ENCODE measurements at regions of chr13 and their contacts with region 1.

Region 1: DNA sequence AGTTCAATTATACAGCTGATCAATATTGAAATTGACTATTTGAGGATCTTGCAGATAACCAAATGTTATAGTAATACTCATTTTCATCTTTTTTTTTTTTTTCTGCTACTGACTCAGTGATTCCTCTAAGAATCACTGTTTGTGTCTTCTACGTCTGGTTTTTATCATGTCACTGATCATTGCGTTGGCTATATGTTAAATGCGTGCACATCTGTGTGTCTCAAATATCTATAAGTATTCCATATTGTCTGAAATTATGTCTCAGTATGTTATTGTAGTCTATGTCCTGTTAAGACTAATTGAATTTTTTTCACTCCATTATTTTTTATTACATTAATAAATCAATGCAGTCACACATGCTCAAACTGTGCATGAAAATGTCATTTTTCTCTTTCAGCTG is 200.5 kb downstream of the PCDH20 start:
- DNase-seq: no peak
- ATAC-seq: no peak
- H3K4me3 ChIP-seq: no peak overlapping the region
- H3K27ac ChIP-seq: no peak overlapping the region
- H3K4me1 ChIP-seq: no peaks in the 10 kb centered on the region
- H3K27me3 ChIP-seq: no peaks in the 10 kb centered on the region

Region 2: DNA sequence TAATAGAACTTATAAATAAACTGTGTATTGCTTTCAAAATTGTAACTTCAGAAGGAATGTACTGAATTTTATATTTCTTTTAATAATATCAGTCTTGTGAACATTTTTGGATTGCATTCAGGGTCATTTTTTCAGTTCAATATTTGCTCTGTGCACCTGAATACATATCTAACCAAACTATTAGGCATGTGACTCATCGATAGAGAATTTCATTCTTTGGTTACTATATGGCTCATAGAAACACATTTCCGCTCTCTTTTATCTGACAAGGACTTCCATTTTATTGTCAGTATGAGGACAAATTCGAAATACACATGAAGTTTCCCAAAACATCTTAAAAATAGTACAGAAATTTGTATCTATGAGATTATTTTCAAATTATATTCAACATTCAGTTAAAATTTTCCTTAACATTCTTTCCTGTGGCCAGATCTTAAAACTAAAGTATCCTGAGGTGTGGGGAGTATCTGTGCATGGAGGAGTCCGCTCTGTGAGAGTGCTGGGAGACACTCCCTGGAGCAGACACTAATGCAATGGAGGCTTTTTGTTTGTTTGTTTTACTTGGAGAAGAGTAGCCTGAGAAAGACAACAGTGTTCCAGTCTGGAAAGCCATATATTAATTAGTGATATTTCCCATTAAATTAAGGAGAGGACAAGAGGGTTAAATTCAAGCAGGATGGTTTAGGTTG is 283.1 kb before region 1 on chr13:
- intact Hi-C with region 1: no loop called
- DNase-seq: no peak
- ATAC-seq: no peak
- H3K4me3 ChIP-seq: no peak overlapping the region
- H3K27ac ChIP-seq: no peak overlapping the region
- H3K4me1 ChIP-seq: no peaks in the 10 kb centered on the region
- H3K27me3 ChIP-seq: no peaks in the 10 kb centered on the region

Region 3: DNA sequence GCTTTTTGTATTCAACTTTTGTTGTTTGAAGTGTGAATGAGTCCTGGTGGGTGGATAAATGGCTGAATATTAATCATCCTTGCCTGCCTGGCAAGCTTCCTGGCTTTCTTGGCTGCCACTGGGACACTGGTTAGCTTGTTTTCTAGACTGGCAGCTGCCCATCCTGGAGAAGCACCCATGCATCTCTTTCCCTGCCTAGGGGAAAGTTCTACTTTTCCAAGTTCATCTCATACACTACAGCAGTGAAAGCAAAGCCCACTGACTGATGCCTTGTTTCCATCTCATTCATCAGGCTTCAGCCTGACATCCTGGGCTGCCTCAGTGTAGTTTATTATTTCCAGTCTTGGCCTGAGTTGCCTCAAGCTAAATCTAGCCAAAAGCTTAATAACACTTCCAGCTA is 44.3 kb before region 1 on chr13:
- intact Hi-C with region 1: loop called in 1 of 2 experiments (anchors 5 kb)
- DNase-seq: no peak
- ATAC-seq: no peak
- H3K4me3 ChIP-seq: no peak overlapping the region
- H3K27ac ChIP-seq: no peak overlapping the region
- H3K4me1 ChIP-seq: no peaks in the 10 kb centered on the region
- H3K27me3 ChIP-seq: no peaks in the 10 kb centered on the region

Region 4: GRCh38 chr13:61255035-61255796 is 40.1 kb after region 1 on chr13:
- intact Hi-C with region 1: no loop called
- DNase-seq: no peak
- ATAC-seq: no peak
- H3K4me3 ChIP-seq: no peak overlapping the region
- H3K27ac ChIP-seq: no peak overlapping the region
- H3K4me1 ChIP-seq: no peaks in the 10 kb centered on the region
- H3K27me3 ChIP-seq: no peaks in the 10 kb centered on the region

Region 5: GRCh38 chr13:61654481-61654880 is 439.4 kb after region 1 on chr13:
- intact Hi-C with region 1: no loop called
- DNase-seq: no peak
- ATAC-seq: no peak
- H3K4me3 ChIP-seq: no peak overlapping the region
- H3K27ac ChIP-seq: no peak overlapping the region
- H3K4me1 ChIP-seq: no peaks in the 10 kb centered on the region
- H3K27me3 ChIP-seq: no peaks in the 10 kb centered on the region